HEK293 (cell line): ENCODE measurements at regions of chr1 and their contacts with region 1.

Region 1: DNA sequence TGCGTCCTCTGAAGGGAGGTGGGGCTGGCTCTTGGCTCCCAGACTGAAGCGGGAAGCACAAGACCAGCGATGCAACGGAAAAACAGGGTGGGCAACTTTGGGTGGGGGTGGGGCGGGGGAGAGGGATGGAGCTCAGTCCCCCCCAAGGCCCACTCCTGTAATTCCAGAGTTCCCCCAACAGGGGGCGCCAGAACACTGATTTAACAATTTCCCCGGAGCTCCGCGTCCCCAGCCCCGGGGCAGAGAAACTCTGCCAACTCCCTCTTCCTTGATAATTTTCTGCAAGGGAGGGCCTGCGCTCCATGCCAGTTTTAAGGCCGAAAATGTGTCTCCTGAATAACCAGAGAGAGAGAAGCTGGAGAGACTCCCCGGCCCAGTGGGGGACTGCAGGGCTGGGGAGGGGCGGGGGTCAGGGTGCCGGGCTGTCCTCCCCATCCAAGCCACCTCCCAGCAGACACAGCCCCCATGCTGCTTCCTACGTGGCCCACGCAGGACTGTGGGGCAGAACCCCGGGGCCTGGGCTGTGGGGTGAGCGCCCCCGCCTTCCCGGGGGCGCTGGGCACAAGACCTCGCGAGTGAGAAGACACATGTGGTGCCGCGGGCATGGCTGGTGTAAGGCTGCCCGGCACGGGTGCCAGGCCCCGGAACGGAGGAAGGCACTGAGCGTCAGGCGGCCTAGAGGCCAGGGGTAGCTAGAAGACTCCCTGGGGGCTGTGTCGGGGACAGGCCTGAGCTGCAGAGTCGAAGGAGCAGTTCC is 51.4 kb downstream of the KIF21B start:
- H3K4me3 ChIP-seq: no peak overlapping the region
- H3K27ac ChIP-seq: no peak overlapping the region
- H3K4me1 ChIP-seq: no peaks in the 10 kb centered on the region
- CTCF ChIP-seq: 0 out of 2 replicates have a peak, but pooled peaks have one; percentile 17

Region 2: DNA sequence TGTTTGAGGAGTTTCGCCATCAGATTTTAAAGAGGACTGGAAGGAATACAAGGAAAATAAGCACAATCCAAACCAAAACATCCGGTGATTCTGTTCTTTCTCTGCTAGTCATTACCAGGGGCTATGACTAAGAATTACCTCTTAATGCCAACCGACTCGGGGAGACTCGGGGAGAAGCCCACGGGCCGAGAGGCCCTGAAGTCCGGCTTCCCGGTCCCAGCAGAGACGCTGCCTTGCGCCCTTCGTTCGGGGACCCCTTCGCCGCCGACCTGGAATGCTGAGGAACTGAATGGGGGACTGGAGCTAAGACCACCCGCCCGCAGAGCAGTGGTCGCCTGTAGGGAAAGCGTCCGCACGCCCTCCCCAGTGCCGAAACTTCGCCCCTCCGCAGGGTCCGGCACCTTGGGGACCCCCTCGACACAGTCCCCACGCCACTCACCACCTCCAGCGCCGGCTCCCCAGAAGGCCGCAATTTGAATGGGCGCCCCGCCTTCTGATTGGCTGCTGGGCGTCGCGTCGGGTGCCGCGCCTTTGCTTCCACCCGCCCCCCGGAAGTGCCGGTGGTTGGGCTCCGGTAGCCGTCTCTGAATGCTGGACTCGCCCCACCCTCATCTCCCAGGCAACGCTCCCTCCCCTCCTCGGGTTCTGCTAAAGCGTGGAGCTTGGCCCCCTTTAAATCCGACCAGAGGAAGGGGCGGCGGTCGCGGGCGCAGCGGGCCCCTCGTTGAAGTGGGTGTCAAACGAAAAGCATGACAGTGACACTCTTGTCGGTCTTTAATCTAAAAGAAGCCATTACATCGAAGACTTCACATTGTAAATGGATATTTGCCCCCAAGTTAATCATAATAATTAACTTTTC is 351.6 kb before region 1 on chr1 and contains the start of gene KIF14:
- CTCF ChIA-PET with region 1: interaction called, 16 read pairs
- POLR2A ChIA-PET with region 1: no interaction called
- H3K4me3 ChIP-seq: peak within 1 kb of the TSS; percentile 94
- H3K27ac ChIP-seq: peak within 1 kb of the TSS; percentile 19; the same call in 1 of the 2 replicates
- H3K4me1 ChIP-seq: no peaks in the 10 kb centered on the region
- CTCF ChIP-seq: peak; percentile 12; the same call in 1 of the 2 replicates

Region 3: DNA sequence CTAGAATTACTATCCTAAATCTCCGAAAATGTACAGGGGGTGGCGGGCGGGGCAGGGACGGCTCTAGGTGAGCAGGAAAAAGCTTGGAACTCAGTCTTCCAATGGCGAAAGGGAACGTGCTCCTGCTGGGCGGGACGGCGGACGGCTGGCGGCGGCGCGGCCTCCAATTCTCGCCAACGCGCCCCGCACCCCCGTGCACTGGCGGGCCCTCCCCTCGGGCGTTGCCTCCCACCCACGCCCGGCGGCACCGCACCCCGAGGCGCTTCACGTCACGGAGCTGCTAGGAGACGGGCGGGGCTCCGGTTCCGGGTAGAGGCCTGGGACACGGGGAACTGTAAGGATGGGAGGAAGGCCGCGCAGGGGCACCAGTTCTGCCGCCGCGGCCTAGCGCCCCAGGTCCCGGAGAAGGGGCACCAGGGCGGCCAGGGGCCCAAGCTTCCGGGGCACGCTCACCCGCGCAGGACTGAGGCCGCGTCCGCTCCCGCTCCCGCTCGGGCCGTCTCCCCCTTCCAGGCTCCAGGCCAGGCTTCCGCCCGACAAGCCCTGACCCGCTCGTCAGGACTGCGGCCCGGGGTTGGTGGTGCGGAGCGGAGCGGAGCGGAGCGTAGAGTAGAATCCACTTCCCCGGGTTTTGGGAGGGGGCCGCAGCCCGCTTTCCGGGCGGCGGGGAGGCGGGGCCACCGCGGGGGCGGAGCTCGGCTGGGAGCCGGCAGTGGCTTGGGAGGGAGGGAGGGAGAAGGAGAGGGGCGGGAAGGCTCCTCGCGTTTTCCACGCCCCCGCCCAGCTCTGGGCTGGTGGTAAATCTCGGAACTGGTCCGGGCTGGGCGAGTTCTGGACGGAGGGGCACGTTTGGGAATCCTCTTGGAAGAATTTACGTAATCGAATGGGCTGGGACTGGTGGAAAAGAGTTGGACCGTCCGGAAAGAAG is 302.6 kb before region 1 on chr1 and contains the start of gene DDX59:
- CTCF ChIA-PET with region 1: no interaction called
- POLR2A ChIA-PET with region 1: no interaction called
- H3K4me3 ChIP-seq: peak within 1 kb of the TSS; percentile 98
- H3K27ac ChIP-seq: peak within 1 kb of the TSS; percentile 98
- H3K4me1 ChIP-seq: peaks cover 3% of the 10 kb centered on the region; the same call in 1 of the 2 replicates
- CTCF ChIP-seq: peak; percentile 45

Region 4: DNA sequence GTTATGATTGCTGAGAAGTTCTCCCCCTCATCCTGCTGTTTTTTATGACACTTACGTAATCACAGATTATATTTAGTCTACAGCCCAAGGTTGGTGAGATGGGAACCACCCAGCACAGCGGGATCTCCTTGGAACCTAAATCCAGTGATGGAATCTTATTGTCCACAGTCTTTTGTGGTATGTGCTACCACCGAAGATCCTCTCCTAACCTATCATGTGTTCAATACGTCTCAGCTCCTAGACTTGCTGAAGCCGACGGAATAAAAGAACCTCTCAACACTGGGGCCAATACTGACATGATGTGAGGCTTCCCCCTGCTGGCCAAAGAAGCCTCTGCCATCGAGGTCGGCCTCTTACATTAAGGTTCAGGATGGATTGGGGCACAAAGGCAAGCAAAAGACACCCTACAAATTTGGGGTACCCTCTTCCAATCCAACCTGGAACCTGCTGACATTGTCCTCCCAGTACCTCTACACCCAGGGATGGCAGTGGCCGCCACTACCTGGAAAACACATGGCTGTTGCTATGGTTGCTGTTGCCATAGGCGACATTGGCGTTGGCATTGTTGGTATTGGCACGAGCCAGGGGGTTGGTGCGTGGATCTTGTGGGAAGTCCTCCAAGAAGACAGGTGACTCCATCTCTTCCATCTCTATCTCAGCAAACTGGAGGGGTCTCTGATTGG is 70.8 kb after region 1 on chr1:
- CTCF ChIA-PET with region 1: interaction called, 108 read pairs
- POLR2A ChIA-PET with region 1: no interaction called
- H3K4me3 ChIP-seq: no peak overlapping the region
- H3K27ac ChIP-seq: no peak overlapping the region
- H3K4me1 ChIP-seq: no peaks in the 10 kb centered on the region
- CTCF ChIP-seq: peak; percentile 84

Region 5: DNA sequence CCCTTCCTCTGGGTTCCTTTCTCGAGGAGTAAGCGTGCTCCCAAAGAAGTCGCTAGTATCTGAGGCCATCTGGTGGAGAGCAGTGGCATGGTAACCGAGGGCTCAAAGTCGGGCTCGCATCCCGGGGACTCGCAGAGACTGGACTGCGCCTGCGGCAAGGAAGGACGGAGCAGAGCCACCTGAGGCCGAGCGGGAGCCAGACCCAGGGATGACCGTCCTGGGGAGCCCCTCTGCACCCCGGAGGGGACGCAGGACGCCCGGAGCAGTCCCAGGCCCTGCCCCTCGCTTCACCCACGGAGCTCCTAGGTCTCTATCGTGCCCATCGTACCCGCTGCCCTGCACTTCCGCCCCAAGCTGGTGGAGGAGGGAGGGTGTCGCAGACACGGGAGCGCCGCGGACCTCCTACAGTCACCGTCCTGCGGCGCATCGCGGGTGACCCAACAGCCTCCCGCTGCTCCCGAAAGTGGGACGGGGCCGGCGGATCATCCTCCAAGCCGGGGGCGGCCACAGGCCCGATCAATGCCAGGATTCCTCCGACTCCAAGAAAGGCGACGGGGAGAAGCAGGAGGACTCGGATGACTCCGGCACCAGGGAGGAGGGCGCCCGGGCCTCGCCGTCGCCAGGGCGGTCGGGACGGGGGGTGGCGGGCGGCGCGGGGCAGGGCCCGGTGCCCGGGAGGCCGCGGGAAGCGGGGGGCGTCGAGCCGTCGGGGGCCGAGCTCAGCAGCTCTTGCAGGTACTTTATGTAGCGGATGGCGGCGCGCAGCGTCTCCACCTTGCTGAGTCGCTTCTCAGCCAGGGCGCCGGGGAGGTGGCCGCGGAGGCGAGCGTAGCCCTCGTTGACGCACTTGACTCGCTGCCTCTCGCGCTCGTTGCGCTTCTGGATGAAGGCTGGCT is 142.4 kb after region 1 on chr1:
- CTCF ChIA-PET with region 1: interaction called, 48 read pairs
- POLR2A ChIA-PET with region 1: interaction called, 7 read pairs
- H3K4me3 ChIP-seq: peak overlapping the region; percentile 71
- H3K27ac ChIP-seq: peak overlapping the region; percentile 32; the same call in 1 of the 2 replicates
- H3K4me1 ChIP-seq: no peaks in the 10 kb centered on the region
- CTCF ChIP-seq: peak; percentile 97

Region 6: GRCh38 chr1:201361652-201362504 is 389.7 kb after region 1 on chr1:
- CTCF ChIA-PET with region 1: interaction called, 10 read pairs
- POLR2A ChIA-PET with region 1: no interaction called
- H3K4me3 ChIP-seq: no peak overlapping the region
- H3K27ac ChIP-seq: no peak overlapping the region
- H3K4me1 ChIP-seq: no peaks in the 10 kb centered on the region
- CTCF ChIP-seq: peak; percentile 82